ENCODE measurements at regions of chr19 and their contacts with region 1.

Region 1: DNA sequence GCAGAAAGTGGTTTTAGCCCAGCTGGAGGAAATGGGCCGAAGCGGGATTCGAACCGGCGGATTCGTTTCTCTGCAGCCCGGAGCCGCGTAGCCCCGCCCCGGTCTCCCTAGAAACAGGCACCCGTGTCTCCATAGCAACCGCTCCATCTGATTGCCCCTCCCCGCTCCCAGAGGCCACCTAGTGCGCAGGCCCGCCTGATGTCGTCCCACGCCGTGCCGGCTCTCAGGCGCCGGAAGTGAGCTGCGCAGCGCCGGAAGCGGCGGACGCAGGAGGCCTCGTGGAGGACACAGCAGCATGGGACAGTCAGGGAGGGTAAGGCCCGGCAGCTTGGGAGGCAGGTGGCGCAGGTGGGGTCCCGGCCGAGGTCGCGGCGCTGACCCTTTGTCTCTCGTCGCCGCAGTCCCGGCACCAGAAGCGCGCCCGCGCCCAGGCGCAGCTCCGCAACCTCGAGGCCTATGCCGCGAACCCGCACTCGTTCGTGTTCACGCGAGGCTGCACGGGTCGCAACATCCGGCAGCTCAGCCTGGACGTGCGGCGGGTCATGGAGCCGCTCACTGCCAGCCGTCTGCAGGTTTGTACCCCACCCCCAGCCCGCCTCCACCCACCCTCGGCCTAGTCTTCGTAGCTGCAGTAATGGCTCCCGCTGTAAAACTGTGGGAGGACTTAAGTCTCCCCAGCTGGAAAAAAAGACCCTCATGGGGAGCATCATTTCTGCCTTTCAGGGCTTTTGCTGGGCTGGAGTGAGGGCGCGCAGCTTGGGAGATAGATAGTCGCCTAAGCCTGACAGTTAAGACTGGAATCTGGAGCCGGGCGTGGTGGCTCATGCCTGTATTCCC is at the start of gene PPAN:
- DNase-seq: peak; percentile 97
- H3K4me3 Mint-ChIP-seq: peak within 1 kb of the TSS; percentile 95
- H3K27ac Mint-ChIP-seq: peak within 1 kb of the TSS; percentile 100
- H3K4me1 Mint-ChIP-seq: peaks cover 51% of the 10 kb centered on the region
- H3K27me3 Mint-ChIP-seq: no peaks in the 10 kb centered on the region
- total RNA-seq, gene PPAN: 160 and 162 TPM in 2 replicates

Region 2: GRCh38 chr19:10095948-10096621 is 10.2 kb before region 1 on chr19:
- intact Hi-C with region 1: loop called (anchors 1 kb)
- DNase-seq: peak; percentile 88
- H3K4me3 Mint-ChIP-seq: peak overlapping the region; percentile 49
- H3K27ac Mint-ChIP-seq: peak overlapping the region; percentile 22
- H3K4me1 Mint-ChIP-seq: peaks cover 13% of the 10 kb centered on the region
- H3K27me3 Mint-ChIP-seq: no peaks in the 10 kb centered on the region

Region 3: DNA sequence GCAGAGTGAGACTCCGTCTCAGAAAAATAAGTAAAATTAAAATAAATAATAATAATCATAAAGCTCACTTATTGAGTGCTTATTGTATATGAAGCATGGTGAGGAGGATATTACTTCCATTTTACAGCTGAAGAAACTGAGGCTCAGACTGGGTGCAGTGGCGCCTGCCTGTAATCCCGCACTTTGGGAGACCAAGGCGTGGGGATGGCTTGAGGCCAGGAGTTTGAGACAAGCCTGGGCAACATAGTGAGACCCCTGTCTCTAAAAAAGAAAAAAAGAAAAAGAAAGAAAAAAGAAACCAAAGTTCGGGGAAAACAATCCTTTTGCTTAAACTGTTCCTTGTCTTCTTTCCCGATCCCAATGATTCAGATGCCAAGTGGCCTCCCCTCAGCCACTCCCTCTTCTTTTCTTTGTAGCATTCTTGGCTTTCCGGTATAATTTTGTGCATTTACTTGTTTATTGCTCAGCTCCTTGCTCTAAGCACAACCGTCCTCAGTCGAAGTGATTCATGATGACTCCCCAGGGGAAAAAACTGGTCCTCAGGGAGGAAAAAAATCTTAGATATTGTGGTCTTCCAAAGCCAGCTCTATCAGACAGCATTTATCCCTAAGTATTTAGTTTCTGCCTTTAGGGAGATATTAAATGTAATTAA is 14.3 kb after region 1 on chr19:
- intact Hi-C with region 1: no loop called
- DNase-seq: no peak
- H3K4me3 Mint-ChIP-seq: peak overlapping the region; percentile 26
- H3K27ac Mint-ChIP-seq: no peak overlapping the region
- H3K4me1 Mint-ChIP-seq: peaks cover 6% of the 10 kb centered on the region
- H3K27me3 Mint-ChIP-seq: no peaks in the 10 kb centered on the region

Region 4: DNA sequence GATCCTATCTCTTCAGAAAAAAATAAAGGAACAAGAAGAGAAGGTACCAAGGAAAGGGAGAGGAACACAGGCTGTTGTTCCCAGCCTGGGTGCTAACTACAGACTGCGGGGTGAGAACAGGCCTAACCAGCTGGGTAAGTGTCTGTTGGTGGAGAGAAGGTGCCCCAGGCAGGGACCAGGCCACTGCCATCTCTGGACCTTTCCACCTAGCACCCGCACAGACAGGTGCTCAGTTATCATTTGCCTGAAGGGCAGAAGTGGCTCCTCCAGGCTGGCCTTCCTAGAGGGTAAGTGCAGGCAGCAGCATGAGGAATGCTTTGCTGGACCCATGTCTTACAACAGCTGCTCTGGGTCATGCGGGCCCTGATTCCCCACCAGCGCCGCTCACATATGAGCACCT is 78.3 kb after region 1 on chr19:
- intact Hi-C with region 1: loop called (anchors 2 kb)
- DNase-seq: no peak
- H3K4me3 Mint-ChIP-seq: no peak overlapping the region
- H3K27ac Mint-ChIP-seq: peak overlapping the region; percentile 33
- H3K4me1 Mint-ChIP-seq: peaks cover 21% of the 10 kb centered on the region
- H3K27me3 Mint-ChIP-seq: no peaks in the 10 kb centered on the region

Region 5: GRCh38 chr19:10194500-10195289 is 88.4 kb after region 1 on chr19 and contains the start of gene DNMT1:
- intact Hi-C with region 1: loop called (anchors 2 kb)
- DNase-seq: peak; percentile 98
- H3K4me3 Mint-ChIP-seq: peak within 1 kb of the TSS; percentile 97
- H3K27ac Mint-ChIP-seq: peak within 1 kb of the TSS; percentile 96
- H3K4me1 Mint-ChIP-seq: peaks cover 29% of the 10 kb centered on the region
- H3K27me3 Mint-ChIP-seq: no peaks in the 10 kb centered on the region
- total RNA-seq, gene DNMT1: 367 and 370 TPM in 2 replicates

Region 6: DNA sequence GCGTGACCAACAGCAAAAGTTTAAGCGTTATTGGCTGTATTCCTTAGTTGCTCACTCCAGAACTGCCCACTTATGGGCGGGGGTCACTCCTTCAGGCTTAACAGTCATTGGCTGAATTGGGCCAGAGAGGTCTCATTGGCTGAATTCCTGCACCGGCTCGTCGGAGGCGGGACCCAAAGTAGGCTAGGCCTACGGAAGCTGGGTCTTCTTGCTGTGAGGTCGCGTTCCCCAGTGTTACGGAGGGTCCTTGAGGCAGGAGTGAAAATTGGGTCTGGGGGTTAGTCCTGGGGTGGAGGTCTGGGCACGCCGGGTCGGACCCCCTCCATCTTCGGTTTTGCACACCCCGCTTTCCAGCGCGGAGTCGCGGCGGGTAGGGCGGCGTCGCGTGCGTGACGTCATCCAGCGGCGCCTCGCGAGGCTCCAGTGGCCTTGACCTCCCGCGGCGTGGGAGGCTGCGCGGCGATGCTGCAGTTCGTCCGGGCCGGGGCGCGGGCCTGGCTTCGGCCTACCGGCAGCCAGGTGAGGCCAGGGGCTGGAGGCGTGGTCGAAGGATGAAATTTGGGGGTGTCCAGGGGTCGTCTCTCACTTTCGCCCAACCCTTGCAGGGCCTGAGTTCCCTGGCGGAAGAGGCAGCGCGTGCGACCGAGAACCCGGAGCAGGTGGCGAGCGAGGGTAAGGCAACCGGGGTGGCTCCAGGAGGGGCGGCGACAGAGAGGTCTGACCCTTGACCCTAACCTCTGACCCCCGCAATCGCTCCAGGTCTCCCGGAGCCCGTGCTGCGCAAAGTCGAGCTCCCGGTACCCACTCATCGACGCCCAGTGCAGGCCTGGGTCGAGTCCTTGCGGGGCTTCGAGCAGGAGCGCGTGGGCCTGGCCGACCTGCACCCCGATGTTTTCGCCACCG is 145.7 kb after region 1 on chr19 and contains the start of gene MRPL4:
- intact Hi-C with region 1: loop called (anchors 5 kb)
- DNase-seq: peak; percentile 97
- H3K4me3 Mint-ChIP-seq: peak within 1 kb of the TSS; percentile 95
- H3K27ac Mint-ChIP-seq: peak within 1 kb of the TSS; percentile 94
- H3K4me1 Mint-ChIP-seq: peaks cover 2% of the 10 kb centered on the region
- H3K27me3 Mint-ChIP-seq: no peaks in the 10 kb centered on the region
- total RNA-seq, gene MRPL4: 133 and 135 TPM in 2 replicates

Region 7: DNA sequence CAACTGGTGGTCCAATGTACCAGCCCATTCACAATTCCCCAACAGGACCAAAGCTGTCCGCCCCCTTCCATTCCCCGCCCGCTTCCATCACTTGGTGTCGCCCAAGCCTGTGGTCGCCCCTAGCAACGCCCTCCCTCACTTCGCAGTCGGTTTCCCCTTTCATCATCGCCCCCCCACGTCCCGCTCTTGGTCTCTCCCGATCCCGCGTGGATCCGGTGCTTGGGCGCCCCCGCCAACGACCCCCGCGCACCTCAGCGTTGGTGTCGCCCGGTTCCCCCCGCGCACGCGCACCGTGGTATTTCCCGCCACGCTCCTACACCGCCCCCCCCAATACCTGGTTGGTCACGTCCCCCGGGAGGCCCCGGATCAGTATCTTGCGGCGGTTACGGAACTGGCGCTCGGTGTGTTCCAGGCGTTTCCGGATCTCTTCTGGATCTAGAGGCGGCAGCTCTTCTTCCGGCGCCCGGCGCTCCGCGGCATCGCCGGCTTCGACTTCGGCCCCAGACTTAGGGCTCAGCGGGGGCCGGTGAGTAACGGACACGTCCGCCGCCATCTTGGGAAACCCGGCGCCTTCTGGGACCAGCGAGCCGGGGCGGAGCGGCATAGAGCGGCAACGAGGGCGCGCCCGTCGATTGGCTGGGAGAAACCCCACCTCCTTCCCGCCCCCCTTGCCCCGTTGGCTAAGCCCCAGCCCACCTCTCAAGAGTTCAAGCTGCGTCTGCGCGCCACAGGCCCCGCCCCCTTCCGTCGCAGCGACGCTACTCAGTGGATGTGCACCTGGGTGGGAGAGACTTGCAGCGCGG is 226.8 kb after region 1 on chr19 and contains the start of gene RAVER1:
- intact Hi-C with region 1: no loop called
- DNase-seq: peak; percentile 95
- H3K4me3 Mint-ChIP-seq: peak within 1 kb of the TSS; percentile 90
- H3K27ac Mint-ChIP-seq: peak within 1 kb of the TSS; percentile 94
- H3K4me1 Mint-ChIP-seq: peaks cover 12% of the 10 kb centered on the region
- H3K27me3 Mint-ChIP-seq: no peaks in the 10 kb centered on the region
- total RNA-seq, gene RAVER1: 90.3 and 91.1 TPM in 2 replicates

Region 8: DNA sequence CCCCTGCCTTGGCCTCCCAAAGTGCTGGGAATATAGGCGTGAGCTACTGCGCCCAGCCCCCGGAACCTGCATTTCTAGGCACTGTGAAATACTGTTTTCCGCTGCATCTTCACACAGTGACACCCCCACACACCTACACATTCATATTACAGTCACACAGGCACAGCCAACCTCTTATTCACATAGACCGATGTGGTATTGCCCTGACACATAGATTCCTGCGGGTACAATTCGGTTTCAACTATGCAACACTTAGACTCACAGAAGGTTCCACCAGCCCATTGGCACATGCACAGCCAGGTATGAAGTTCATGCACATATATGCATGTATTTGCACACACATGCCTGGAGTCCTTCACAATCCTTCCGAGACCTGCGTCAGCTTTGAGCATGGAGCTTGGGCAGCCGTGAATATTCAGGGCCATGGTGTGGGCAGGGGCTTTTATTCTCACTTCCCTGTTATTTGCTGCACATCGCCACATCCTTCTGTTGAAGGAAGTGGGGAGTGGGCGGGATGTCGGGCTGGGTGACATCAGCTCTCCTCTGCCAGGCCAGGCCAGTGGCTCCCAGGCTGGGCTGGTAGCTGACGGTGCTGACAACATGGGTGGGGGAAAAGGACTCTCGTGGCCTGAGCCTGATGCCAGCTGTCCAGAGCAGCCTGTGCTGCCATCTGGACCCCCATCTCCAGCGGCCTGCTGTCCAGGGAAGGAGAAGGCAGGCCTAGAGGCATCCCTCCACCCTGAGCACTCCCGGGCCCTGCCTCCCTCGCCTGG is 302.4 kb after region 1 on chr19:
- intact Hi-C with region 1: loop called (anchors 5 kb)
- DNase-seq: peak; percentile 73
- H3K4me3 Mint-ChIP-seq: peak overlapping the region; percentile 63
- H3K27ac Mint-ChIP-seq: peak overlapping the region; percentile 92
- H3K4me1 Mint-ChIP-seq: peaks cover 63% of the 10 kb centered on the region
- H3K27me3 Mint-ChIP-seq: no peaks in the 10 kb centered on the region

Measured in activated T-helper 2 cell treated with anti-CD3 and anti-CD28 coated beads, Interferon-gamma antibody, Interleukin-2, Interleukin-4, amounts not matched to agents 10 μg/mL and 5 μg/mL and 100 μg/mL, durations not matched to agents 14 hours and 24 hours and 36 hours (primary cell).